BJ (cell line): ENCODE measurements at regions of chr7 and their contacts with region 1.

Region 1: DNA sequence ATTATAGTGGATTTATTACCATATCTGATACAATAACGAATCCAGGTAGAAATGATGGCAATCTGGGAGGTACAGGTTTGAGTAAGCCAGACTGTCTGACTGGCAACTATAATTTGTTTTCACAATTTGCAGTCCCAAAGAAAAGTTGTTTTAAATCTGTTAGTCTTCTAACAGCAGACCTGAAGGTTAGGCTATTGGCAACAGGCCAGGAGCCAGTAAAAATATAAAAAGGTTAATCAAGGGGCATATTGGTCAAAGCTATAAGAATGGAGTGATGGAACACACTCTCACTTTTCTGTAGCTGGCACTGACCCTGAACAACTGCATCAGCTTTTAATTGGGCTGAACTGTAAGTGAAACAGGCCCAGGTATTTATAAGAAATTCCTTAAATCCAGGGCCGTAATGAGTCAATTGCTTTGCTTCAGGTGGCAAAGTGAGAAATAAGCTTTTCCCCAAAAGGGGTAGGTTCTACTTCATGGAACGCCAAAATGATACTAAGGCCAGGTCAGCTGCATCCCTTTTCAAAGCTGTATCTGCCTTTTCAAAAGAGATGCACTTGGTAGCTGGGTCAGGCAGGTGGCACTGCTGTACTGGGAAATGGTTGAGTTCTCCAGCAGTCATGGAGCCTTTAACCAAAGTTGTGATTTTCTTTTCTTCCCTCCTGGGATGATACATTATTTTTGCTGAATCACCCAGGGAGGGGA is 7.0 kb upstream of the GPR22 start:
- DNase-seq: no peak
- H3K4me3 ChIP-seq: no peak overlapping the region
- H3K27me3 ChIP-seq: no peaks in the 10 kb centered on the region
- CTCF ChIP-seq: peak; percentile 84

Region 2: DNA sequence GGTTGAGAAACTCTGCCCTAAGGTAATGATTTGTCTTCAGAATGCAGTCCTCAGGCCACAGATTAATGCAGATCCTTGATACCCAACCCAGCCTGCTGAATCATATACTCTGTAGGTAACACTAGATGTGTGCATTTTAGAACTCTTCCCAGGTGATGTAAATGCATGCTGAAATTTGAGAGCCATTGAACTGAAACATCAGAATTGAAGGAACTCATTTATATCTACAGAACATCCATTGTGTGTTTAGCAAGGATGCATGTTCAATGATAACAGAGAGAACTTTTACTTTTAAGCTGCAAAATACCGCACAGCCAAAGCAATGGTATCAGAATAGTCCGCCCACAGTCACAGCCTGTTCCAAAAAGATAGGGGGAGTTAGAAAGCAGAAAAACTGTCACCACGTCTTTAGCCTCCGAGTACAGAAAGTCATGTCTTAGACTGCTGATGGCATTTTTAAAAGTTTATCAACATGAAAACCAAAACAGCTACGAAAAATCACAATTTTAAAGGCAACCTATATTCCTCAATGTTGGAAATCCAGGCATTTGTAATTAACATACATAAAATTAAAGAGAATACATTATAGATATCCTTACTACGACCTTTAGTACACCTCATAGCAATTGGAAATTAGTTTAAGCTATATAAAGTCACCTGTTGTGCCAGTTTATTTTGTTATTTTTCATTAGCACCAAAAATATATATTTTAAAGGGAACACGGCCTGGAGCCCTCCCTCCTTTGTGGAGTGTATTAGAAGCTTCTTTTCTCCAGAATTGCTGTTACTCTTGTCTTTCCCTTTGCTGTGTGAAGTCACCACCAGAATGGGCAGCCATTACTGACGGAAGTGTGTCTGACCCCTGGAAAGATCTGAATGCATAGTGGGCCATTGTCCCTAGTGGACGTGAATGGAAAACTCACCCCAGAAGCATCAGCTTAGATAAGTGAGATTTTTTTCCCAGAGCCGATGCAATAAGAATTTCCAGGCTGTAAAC is 484.2 kb before region 1 on chr7:
- CTCF ChIA-PET with region 1: no interaction called
- POLR2A ChIA-PET with region 1: no interaction called
- DNase-seq: no peak
- H3K4me3 ChIP-seq: no peak overlapping the region
- H3K27me3 ChIP-seq: peaks cover 1% of the 10 kb centered on the region; the same call in 1 of the 2 replicates
- CTCF ChIP-seq: no peak

Region 3: DNA sequence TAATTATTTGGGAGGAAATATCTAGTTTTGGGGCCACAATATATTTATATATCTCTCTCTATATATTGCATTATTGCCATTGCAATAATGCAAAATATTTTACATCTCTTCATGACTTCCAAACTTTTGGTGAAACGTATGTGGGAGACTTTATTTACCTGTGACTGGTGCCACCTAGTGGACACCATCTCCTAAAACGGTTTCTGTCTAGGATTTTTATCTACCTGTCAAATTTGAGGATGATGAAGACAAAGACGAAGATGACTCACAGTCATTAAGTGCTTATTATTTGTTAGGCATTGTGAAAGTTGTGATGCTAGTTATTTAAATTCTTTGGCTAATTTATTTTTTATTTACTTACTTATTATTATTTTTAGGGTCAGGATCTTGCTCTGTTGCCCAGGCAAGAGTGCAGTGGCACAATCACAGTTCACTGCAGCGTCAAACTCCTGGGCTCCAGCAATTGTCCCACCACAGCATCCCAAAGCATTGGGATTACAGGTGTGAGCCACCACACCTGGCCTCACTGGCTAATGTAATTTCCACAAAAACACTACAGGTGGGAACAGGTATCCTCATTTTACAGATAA is 262.4 kb after region 1 on chr7:
- CTCF ChIA-PET with region 1: interaction called, 75 read pairs
- POLR2A ChIA-PET with region 1: no interaction called
- DNase-seq: no peak
- H3K4me3 ChIP-seq: no peak overlapping the region
- H3K27me3 ChIP-seq: peaks cover 6% of the 10 kb centered on the region
- CTCF ChIP-seq: peak; percentile 53